Thyroid gland (tissue), 4 donors: ENCODE measurements at regions of chr1 and their contacts with region 1.

Region 1: DNA sequence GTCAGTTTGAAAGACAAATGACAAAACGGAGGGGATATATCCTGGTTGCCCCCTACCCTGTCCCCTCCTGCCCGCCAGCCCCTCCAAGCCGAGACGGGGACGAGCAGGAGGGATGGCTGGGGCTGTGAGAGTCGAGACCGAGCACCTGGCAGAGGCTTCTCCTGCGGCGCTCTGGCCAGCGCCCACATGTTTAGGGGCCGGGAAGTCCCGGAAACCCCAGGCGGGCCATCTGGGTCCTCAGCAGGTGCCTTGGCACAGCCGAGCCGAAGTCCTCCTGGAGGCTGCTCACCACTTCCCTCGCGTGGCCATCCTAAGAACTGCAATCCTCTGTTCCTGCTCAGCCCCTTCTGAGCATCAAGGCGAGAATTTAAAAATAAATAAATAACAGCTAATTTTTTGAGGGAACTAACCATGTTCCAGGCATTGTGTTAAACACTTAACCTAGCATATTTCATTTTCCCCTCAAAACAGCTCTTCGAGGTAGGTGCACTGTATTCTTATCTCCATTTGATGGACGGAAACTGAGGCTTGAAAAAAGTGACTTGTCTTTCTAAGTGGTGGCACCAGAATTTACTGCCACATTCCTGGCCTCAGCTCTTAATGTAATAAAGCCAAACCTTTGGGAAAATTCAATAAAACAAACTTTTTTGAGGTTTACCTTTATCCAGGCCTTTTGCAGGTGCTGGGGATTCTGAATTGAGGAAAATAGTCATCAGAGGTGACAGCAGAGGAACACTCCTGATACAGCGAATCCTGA is 3.5 kb upstream of the RIMS3 start:
- DNase-seq: peak; percentile 77 to 82
- H3K4me3 ChIP-seq: no peak overlapping the region
- H3K27ac ChIP-seq: no peak overlapping the region
- H3K4me1 ChIP-seq: peaks cover 0 to 10% of the 10 kb centered on the region in 2 donors
- H3K27me3 ChIP-seq: no peaks in the 10 kb centered on the region
- CTCF ChIP-seq: peak; percentile 77 to 99 (median 88)
- POLR2A ChIP-seq: no peak

Region 2: DNA sequence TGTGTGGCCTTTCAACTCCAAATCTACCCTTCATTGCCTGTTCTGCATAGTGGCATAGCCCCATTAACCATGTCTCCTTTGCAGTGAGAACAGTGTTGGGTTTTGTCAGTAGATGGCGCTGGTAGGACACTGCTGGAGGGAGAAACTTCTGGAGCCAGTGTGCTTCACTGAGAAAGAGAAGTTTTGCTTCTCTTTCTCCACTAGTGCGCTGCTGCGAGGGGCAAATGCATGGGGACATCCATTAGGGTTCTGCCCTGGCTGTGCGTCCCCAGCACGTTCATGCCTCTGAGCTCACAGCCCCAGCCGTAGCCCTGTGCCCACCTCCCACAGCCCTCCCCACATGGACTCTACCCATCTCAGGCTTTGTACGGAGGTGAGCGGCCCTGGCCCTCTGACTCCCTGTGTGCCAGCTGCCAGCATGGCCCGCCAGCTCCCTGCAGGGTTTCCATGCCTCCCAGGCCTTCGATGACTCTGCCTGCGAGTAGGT is 56.6 kb before region 1 on chr1:
- intact Hi-C with region 1: loop called (anchors 5 kb)
- DNase-seq: peak; percentile 53 to 64
- H3K4me3 ChIP-seq: no peak overlapping the region
- H3K27ac ChIP-seq: no peak overlapping the region
- H3K4me1 ChIP-seq: peaks cover 0 to 12% of the 10 kb centered on the region in 2 donors
- H3K27me3 ChIP-seq: no peaks in the 10 kb centered on the region
- CTCF ChIP-seq: peak in 5 of 6 experiments; percentile 44 to 77 (median 64)
- POLR2A ChIP-seq: no peak

Region 3: DNA sequence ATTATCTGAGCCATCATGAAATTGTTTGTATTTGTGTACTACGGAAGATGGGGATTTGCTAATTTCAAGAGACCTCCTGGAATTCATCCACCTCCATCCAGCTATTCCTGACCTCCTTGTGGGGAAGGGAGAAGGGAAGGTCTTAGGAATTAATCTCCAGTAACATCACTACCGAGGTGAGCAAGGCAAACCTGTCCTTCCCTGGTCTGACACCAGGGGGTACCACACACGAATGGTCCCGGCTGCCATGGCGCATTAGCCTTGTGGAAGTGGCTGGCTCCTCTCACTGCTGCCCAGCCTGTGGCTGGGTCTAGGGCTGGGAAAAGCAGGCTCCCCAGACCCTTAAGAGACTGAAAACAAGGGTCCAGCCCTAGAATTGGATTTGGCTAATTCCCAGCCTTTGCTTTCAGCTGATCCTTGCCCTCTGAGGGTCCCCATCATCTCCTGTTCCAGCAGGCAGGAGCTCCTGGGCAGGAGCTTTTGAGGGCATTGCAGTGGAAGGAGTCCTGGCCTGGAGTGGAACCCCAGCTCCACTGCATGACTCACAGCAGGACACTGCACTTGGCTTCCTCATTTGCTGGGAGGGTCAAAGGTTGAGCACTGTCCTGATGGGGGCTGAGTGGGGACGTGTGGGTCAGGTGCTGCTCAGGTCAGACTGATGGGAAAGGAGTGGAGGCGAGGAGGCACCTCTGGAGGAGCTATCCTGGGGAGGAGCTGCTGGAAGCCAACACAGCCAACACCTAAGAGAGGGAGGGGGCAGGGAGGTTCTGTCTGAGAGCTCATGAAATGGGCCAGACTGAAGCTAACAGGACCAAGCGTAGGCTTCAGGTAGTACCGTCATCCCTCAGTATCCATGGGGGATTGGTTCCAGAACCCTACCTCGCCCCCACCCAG is 38.2 kb before region 1 on chr1:
- intact Hi-C with region 1: no loop called
- DNase-seq: no peak
- H3K4me3 ChIP-seq: no peak overlapping the region
- H3K27ac ChIP-seq: no peak overlapping the region
- H3K4me1 ChIP-seq: peaks cover 0 to 2% of the 10 kb centered on the region in 2 donors
- H3K27me3 ChIP-seq: no peaks in the 10 kb centered on the region
- CTCF ChIP-seq: peak in 2 of 6 experiments; percentile 17 to 24
- POLR2A ChIP-seq: no peak